ENCODE measurements at regions of chr11 and their contacts with region 1.

Region 1: DNA sequence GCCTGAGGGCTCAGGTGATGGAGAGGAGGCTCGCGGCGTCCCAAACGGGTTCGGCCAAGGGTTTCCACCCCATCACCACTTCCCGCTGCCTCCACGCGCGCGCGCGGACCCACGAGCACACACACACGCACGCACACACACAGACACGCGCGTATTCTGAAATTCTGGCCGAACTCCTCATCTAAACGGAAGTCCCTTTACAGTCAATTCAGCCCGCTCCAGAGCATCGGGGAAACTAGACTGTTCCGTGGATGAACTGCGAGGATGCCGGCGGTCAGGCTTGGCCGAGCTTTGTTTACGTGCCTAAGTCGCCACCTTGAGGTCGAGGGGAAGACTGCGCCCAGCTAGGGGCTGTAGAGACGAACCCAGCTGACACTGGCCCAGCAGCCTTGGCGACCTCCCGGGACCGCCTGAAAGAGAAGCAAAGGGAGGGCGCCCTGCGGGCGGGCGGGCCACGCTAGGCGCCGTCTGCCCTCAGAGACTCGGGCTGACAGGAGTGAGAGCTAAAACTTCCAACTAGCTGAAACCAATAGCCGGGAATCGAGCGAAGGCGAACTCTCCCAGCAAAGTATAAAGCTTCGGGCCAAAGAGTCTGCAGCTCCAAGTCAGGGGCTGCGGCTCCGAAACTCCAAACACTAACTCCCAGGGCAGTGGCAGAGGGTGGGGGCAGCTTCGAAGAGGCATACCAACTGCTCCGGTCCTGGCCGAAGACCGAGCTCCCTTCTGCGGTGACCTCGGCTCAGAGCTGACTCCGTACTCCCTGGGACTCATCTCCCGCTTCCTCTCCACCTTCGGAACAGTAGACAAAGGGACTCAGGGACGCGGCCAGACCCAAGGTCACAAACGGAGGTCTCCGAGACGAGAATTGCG is 124.7 kb upstream of the C11orf58 start:
- DNase-seq: peak; percentile 72 to 93 (median 88)
- H3K4me3 ChIP-seq: peak overlapping the region; percentile 19 to 71 (median 53)
- H3K27ac ChIP-seq: peak overlapping the region in 33 of 59 donors; percentile 10 to 77 (median 47)
- H3K27me3 ChIP-seq: peaks cover 0 to 100% (median 79%) of the 10 kb centered on the region in 45 donors
- CTCF ChIP-seq: peak; percentile 73 to 98 (median 92)

Region 2: GRCh38 chr11:15327786-15328231 is 1285.9 kb before region 1 on chr11:
- intact Hi-C with region 1: loop called (anchors 5 to 10 kb)
- DNase-seq: peak; percentile 26 to 75 (median 60)
- H3K4me3 ChIP-seq: no peak overlapping the region
- H3K27ac ChIP-seq: no peak overlapping the region
- H3K27me3 ChIP-seq: peaks cover 0 to 22% (median 0%) of the 10 kb centered on the region in 45 donors
- CTCF ChIP-seq: peak; percentile 17 to 69 (median 56)

Region 3: DNA sequence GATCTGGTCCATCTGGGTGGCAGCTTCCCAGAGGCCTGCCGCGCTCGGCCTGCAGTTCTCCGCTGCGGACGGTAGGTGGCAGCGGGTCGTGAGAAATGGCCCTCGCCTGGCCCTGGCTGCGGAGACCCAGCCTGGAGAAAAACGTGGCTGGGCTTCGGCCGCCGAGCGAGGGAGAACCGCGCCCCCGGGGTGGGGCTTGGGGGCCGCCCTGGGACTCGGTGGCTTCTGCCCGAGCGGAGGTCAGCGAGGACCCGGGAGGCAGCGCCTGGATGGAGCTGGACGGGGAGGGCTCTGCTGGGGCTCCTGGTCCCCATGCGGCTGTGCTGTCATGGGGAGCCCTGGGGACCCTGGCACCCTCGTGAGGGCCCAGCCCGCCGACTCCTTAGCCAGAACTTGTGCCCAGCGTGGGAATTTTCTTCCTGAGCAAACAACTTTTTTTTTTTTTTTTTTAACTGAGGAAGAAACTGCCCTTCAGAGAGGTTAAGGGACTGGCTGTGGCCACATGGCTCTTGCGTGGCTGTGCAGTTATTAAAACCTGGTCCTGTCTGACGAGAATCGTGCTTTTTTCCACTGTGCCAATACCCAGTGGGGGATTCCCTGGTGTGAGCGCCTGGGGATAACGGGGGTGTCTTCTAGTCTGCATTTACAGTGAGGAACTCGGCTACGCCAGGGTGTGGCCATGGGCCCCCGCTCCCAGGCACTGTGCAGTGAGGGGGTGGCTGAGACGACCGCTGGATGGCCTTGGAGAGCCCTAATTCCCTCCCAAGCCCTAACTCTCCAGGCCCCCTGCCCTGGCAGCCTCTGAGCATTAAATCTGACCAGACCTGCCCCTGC is 963.4 kb before region 1 on chr11:
- intact Hi-C with region 1: loop called (anchors 2 kb)
- DNase-seq: peak; percentile 77 to 93 (median 86)
- H3K4me3 ChIP-seq: peak overlapping the region in 55 of 59 donors; percentile 15 to 62 (median 44)
- H3K27ac ChIP-seq: peak overlapping the region in 43 of 59 donors; percentile 0 to 84 (median 43)
- H3K27me3 ChIP-seq: peaks cover 0 to 46% (median 13%) of the 10 kb centered on the region in 45 donors
- CTCF ChIP-seq: peak; percentile 89 to 100 (median 98)

Region 4: DNA sequence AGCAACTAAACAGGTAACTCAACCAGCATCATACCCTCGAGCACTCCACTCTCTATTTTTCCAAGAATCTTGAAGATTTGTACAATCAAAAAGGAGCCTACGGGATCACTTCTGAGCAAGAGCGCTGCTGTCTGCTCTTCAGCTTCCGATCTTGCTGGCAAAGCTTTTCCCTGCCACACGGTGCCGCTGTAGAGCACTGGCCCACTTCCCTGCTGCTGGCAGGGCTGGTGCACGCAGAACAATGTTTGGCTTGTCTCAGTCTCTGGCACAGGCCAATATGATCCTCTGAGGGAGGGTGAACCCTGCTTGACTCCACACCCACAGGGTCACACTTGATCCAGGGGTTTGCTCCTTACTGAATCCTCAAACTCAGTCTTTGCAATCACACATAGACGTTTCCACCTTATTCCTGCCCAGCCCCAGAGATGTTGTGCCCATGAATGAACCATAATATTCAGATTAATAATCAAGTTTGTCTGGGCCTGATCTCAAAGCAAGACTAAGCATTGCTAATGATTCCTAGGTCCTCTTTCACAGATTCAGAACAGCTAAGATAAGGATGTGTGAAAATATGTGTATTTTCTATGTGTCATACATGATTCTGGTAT is 794.0 kb before region 1 on chr11:
- intact Hi-C with region 1: loop called in 1 of 2 experiments (anchors 5 kb)
- DNase-seq: peak; percentile 26 to 90 (median 79)
- H3K4me3 ChIP-seq: no peak overlapping the region
- H3K27ac ChIP-seq: no peak overlapping the region
- H3K27me3 ChIP-seq: peaks cover 0 to 33% (median 0%) of the 10 kb centered on the region in 45 donors
- CTCF ChIP-seq: peak; percentile 62 to 98 (median 89)

Region 5: DNA sequence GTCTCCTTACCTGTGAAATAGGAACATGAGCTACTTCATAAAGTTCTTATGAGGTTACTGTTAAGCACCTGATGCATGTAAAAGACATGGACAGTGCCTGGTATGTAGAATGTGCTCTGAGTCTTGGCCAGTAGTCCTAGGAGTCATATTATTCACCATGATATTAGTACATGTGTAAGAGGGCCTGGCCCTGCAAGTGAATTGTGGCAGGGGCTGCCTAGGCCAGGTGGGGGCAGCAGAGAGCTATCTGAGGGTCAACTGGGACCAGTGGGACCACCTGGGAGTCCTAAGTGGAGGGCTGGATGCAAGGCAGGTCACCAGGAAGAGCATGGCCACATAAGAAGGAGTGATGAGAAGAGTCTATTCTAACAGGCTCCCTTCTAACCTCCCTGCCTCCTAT is 786.9 kb before region 1 on chr11:
- intact Hi-C with region 1: loop called (anchors 2 to 5 kb)
- DNase-seq: peak in 5 of 10 donors; percentile 39 to 54 (median 43)
- H3K4me3 ChIP-seq: no peak overlapping the region
- H3K27ac ChIP-seq: no peak overlapping the region
- H3K27me3 ChIP-seq: peaks cover 0 to 13% (median 0%) of the 10 kb centered on the region in 45 donors
- CTCF ChIP-seq: peak; percentile 25 to 76 (median 64)

Region 6: DNA sequence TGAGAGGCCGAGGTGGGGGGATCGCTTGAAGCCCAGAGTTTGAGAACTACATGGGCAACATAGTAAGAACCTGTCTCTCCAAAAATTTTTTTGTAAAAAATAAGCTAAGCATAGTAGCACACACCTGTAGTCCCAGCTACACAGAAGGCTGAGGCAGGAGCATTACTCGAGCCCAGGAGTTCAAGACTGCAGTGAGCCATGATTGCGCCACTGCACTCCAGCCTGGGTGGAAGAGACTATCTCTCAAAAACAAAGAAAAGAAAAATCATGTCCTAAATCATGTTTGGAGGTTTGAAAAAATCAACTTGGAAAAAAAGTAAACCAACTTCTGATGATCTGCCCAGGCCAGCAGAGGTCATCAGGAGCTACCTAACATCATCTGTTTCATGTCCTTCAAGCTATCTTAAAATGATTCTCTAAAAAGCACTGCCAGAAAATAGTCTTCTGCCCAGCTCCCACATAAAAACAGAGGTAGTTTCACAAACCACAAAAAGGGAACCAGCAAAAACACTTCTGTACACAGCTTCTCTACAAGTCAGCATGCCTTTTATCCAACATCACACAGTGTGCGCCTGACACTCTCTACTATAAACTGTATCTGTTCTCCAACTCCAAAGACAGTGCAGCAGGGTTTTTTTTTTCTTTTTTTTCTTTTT is 422.4 kb before region 1 on chr11:
- intact Hi-C with region 1: loop called in 1 of 2 experiments (anchors 5 kb)
- DNase-seq: no peak
- H3K4me3 ChIP-seq: no peak overlapping the region
- H3K27ac ChIP-seq: no peak overlapping the region
- H3K27me3 ChIP-seq: peaks cover 0 to 59% (median 8%) of the 10 kb centered on the region in 45 donors
- CTCF ChIP-seq: peak in 11 of 56 donors; percentile 7 to 26 (median 18)

Measured in dorsolateral prefrontal cortex (tissue), 120 donors.